H1 (cell line): ENCODE measurements at regions of chr13 and their contacts with region 1.

Region 1: DNA sequence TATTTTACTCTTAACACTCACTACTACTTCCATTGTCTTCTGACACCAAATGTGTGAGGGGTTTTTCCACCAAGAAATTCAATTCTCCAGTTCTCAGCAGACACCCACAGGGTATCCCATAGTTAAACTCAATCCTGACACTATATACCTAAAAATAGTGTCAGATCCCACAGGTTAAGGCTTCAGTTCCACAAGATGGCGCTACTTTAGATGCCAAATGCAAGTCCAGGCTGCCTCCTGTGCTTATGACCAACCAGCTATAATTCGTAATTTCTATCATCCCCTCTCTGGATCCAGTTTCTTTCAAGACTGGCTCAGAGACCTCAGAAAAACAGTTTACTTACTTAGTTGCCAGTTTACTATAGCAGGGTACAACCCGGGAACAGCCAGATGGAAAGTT is 1146.2 kb upstream of the SPRY2 start:
- DNase-seq: peak; percentile 15 to 51
- H3K4me3 ChIP-seq: no peak overlapping the region
- H3K27ac ChIP-seq: no peak overlapping the region
- H3K4me1 ChIP-seq: peaks cover 0 to 4% (median 2%) of the 10 kb centered on the region in 4 experiments; a peak in 2 of 7 replicates
- H3K27me3 ChIP-seq: no peaks in the 10 kb centered on the region
- CTCF ChIP-seq: peak; percentile 1 to 66 (median 61)
- EP300 ChIP-seq: no peak
- POLR2A ChIP-seq: no peak
- RAD21 ChIP-seq: peak; percentile 69 to 78

Region 2: DNA sequence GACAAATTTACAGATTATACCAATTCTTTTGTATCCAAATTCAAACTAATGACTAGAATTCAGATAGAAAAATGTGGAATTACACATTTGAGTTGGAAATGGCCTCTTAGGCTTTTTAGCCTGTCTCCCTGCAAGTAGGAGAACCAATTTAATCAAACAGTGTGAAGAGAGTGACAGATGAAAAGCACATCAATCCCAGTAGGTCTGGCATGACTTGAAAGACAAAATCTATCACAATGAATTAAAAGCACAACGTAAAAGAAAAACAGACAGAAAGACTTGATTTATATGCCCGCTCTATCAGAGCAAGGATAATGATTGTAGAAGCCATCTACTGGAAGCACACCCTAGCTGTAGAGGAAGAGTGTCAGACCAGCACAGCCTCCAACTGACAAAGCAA is 61.9 kb before region 1 on chr13:
- CTCF ChIA-PET with region 1: no interaction called
- POLR2A ChIA-PET with region 1: no interaction called
- DNase-seq: no peak
- H3K4me3 ChIP-seq: no peak overlapping the region
- H3K27ac ChIP-seq: no peak overlapping the region
- H3K4me1 ChIP-seq: no peaks in the 10 kb centered on the region
- H3K27me3 ChIP-seq: no peaks in the 10 kb centered on the region
- CTCF ChIP-seq: no peak
- EP300 ChIP-seq: no peak
- POLR2A ChIP-seq: no peak
- RAD21 ChIP-seq: no peak

Region 3: DNA sequence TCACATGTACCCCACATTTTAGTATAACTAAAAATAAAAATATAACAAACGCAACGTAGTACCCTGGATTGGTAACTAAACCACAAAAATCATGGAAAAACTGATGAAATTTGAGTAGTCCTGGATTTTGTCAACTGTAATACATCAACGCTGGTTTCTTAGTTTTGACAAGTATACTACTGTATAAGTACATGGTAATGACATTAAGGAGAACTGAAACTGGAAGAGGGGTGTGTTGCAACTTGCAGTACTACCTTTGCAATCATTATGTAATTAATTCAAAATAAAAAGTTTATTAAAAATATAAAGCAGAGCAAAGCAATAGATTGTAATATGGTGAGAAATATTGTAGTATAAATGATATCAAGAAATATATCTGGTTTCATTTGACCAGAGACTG is 11.8 kb after region 1 on chr13:
- CTCF ChIA-PET with region 1: interaction called, 15 read pairs
- POLR2A ChIA-PET with region 1: no interaction called
- DNase-seq: no peak
- H3K4me3 ChIP-seq: no peak overlapping the region
- H3K27ac ChIP-seq: no peak overlapping the region
- H3K4me1 ChIP-seq: no peaks in the 10 kb centered on the region
- H3K27me3 ChIP-seq: no peaks in the 10 kb centered on the region
- CTCF ChIP-seq: no peak
- EP300 ChIP-seq: no peak
- POLR2A ChIP-seq: no peak
- RAD21 ChIP-seq: no peak

Region 4: DNA sequence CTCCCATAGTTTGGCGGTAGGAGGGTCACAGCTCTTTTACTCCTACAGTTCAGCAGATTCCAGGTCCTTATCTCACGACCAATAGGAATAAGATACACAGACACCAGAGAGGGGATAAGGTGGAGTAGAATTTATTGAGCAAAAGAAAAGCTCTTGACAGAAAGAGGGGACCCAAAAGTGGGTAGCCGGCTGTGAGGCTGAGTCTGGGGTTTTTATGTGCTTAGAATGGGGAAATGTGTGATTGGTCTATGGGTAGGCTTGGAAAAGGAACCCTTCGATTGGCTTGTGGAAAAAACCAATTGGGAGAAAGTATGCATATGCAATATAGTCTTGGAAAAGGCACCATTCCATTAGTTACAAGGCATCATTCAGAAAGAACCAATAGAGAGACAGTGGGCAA is 210.7 kb after region 1 on chr13:
- CTCF ChIA-PET with region 1: no interaction called
- POLR2A ChIA-PET with region 1: no interaction called
- DNase-seq: no peak
- H3K4me3 ChIP-seq: no peak overlapping the region
- H3K27ac ChIP-seq: no peak overlapping the region
- H3K4me1 ChIP-seq: no peaks in the 10 kb centered on the region
- H3K27me3 ChIP-seq: no peaks in the 10 kb centered on the region; a peak in 1 of 7 replicates
- CTCF ChIP-seq: no peak
- EP300 ChIP-seq: no peak
- POLR2A ChIP-seq: no peak
- RAD21 ChIP-seq: no peak

Region 5: GRCh38 chr13:81872581-81872980 is 385.4 kb after region 1 on chr13:
- CTCF ChIA-PET with region 1: interaction called, 11 read pairs
- POLR2A ChIA-PET with region 1: no interaction called
- DNase-seq: no peak
- H3K4me3 ChIP-seq: no peak overlapping the region
- H3K27ac ChIP-seq: no peak overlapping the region
- H3K4me1 ChIP-seq: peaks cover 0 to 23% (median 13%) of the 10 kb centered on the region in 4 experiments; a peak in 4 of 7 replicates
- H3K27me3 ChIP-seq: no peaks in the 10 kb centered on the region
- CTCF ChIP-seq: peak in 2 of 3 experiments; percentile 36 to 55; a peak in 2 of 4 replicates
- EP300 ChIP-seq: no peak
- POLR2A ChIP-seq: no peak
- RAD21 ChIP-seq: peak; percentile 77 to 84